Left ventricle myocardium inferior (tissue), 1 donor: ENCODE measurements at regions of chr9 and their contacts with region 1.

Region 1: DNA sequence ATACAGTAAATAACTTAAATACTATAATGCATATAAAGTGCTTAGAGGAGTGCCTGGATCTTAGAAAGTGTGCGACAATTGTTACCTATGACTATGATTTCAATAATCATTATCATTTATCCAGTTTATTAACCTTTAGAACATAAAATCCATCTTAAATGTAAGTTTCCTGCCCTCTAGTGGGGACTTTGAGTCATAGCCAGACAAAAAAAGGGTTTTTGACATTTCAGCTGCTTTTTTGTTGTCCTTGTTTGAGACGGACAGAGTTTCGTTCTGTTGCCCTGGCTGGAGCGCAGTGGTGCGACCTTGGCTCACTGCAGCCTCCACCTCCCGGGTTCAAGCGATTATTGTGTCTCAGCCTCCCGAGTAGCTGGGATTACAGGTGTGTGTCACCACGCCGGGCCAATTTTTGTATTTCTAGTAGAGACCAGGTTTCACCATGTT is 9.7 kb upstream of the C9orf152 start:
- DNase-seq: no peak
- H3K4me3 ChIP-seq: no peak overlapping the region
- H3K27ac ChIP-seq: no peak overlapping the region
- H3K4me1 ChIP-seq: no peaks in the 10 kb centered on the region
- H3K27me3 ChIP-seq: no peaks in the 10 kb centered on the region
- CTCF ChIP-seq: peak; percentile 85

Region 2: GRCh38 chr9:110183208-110184145 is 34.2 kb before region 1 on chr9:
- intact Hi-C with region 1: loop called (anchors 5 kb)
- DNase-seq: no peak
- H3K4me3 ChIP-seq: no peak overlapping the region
- H3K27ac ChIP-seq: no peak overlapping the region
- H3K4me1 ChIP-seq: peaks cover 18% of the 10 kb centered on the region
- H3K27me3 ChIP-seq: no peaks in the 10 kb centered on the region
- CTCF ChIP-seq: peak; percentile 81

Region 3: DNA sequence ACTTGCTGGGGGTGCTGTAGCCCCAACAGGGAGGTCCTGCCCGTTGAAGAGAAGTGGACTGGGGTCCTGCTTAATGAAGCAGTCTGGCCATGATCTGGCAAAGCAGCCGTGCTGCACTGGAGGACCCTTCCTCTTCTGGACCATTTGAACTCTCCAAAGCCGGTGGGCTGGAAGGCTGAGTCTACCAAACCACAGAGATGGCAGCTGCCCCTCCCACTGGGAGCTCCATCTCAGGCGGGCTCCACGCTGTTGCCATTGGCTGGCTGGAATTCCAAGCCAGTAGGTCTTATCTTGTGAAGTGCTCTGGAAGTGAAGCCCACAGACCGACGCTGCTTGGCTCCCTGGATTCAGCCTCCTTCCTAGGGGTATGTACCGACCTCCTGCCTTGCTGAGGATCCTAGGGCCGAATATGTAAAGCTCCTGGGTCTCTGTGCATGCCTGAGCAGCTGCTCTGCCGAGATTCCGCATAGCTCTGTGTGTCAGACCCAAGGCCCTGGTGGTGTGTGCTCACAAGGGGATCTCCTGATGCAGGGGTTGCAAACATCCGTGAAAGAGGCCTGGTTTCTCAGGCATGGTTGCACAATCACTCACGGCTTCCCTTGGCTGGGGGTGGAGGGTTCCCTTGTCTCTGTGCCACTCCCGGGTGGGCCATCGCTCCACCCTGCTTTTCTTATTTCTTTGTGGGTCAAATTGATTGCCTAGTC is 381.6 kb after region 1 on chr9:
- intact Hi-C with region 1: no loop called
- DNase-seq: no peak
- H3K4me3 ChIP-seq: no peak overlapping the region
- H3K27ac ChIP-seq: no peak overlapping the region
- H3K4me1 ChIP-seq: no peaks in the 10 kb centered on the region
- H3K27me3 ChIP-seq: peaks cover 17% of the 10 kb centered on the region
- CTCF ChIP-seq: no peak